PC-9 (cell line): ENCODE measurements at regions of chr7 and their contacts with region 1.

Region 1: DNA sequence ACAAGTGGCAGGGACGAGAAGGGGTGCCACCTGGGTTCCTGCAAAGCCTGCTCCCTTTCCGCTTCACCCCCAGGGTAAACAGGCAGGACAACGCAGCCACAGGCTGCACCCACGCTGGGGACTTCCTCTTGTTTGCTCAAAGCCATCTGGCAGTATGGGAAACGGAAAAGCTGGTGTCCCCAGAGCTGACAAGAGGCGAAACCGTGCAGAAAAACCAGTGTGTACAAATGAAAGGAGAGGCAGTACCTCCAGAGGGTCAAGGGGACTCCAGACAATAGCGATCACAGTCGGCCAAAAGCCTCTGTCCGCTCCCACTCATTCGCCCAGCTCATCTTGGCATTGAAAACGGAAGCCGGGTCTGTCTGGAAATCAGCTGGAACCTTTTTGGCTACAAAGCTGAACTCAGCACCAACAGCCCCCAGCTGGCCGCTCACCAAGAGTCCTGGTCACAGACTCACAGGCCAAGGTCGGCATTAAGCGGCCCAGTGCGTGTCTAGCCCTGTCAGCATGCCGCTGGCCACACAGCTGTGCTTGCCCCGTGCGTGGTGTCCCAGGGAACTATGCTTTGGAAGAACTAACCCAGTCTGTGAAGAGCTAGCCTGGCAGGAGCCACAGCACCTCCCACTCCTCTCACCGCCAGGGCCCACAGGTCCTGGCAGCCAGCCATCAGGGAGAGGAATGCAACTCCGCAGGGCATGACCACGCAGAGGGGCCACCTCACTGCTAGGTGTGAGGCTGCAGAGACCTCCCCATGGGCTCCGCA is 10.4 kb downstream of the TNS3 start:
- DNase-seq: peak in 1 of 2 experiments; percentile 91
- H3K4me3 ChIP-seq: no peak overlapping the region
- H3K27ac ChIP-seq: no peak overlapping the region
- H3K4me1 ChIP-seq: peaks cover 47% of the 10 kb centered on the region
- H3K27me3 ChIP-seq: no peaks in the 10 kb centered on the region
- CTCF ChIP-seq: no peak

Region 2: DNA sequence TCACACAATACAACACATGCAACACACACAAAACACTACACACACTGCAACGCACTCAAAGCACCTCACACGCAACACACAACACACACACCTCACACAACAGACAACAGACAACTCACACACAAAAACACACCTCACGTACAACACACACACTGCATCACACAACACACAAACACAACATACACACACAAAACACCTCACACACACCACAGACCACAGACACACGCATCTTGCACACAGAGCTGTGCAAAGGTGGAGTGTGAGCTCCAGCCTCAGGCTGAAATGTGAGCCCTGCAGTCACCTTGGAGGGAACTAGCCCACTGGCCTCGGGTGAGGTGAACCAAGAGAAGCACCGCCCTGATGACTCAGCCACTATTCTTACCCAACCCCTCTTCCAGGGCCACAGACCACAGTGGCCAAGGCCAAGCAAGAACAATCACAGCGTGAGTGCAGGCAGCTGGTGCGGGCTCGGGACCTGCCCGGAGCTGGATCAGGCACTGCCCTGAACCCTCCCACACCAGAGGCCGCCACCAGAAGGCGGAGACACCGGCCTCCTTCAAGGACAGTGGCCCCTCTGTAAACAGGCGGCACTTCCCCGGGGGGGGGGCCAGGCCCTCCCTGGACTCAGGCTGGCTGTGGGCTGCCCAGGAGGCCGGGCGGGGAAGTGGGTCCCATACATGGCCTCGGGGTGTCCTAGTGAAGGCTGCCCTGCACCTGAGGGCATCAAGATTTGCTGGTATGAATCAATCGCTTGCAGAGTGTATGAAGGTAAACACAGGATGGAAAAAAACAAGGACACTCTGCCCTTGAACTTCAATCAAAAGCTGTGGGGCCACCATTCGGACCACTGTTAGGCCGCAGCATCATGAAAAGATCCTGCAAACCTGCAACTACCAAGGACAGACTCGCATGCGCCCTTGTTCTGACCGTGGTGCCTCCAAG is 96.3 kb before region 1 on chr7:
- CTCF ChIA-PET with region 1: interaction called, 5 read pairs
- POLR2A ChIA-PET with region 1: no interaction called
- intact Hi-C with region 1: loop called (anchors 1 kb)
- DNase-seq: peak; percentile 99 to 100
- H3K4me3 ChIP-seq: peak overlapping the region; percentile 16; the same call in 1 of the 2 replicates
- H3K27ac ChIP-seq: peak overlapping the region; percentile 87
- H3K4me1 ChIP-seq: peaks cover 58% of the 10 kb centered on the region
- H3K27me3 ChIP-seq: no peaks in the 10 kb centered on the region
- CTCF ChIP-seq: no peak; the same call in 1 of the 2 replicates

Region 3: DNA sequence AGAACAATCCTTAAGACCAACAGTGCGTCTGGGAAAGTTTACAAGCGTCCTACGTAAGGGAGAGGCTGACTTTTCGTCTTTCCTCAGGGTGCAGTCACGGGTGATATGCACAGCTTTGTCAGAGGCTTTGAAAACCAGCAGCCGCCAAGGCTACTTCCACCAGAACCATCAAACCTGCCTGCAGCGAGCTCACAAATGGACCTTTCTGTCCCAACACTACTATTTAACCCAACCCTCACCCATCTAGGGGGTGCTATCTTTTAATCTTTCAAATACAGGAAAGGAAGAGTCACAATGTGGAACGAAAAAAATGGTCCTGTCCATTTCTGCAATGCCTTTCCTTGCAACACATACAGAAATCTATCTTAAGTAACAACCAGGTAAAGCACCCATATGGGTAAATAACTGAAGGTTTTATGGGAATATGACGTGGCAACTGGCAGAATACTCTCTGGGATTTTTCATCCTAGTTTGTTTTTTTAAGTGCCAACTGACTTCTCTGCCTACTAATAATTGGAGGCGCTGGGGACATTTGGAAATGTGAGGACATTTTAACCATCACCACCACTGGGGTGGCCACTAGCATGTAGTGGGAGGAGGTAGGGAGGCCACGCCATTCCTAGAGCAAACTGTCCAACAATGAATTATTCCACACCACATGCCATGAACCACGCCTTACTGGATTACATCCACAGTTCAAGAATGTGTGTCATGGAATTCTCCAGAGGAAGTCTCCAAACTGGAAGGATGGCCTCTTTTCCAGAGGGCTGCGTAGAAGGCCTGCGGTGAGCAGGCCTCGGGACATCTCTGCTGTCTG is 14.1 kb before region 1 on chr7:
- CTCF ChIA-PET with region 1: interaction called, 19 read pairs
- POLR2A ChIA-PET with region 1: no interaction called
- intact Hi-C with region 1: no loop called
- DNase-seq: no peak
- H3K4me3 ChIP-seq: no peak overlapping the region
- H3K27ac ChIP-seq: no peak overlapping the region
- H3K4me1 ChIP-seq: peaks cover 30% of the 10 kb centered on the region
- H3K27me3 ChIP-seq: no peaks in the 10 kb centered on the region
- CTCF ChIP-seq: no peak

Region 4: GRCh38 chr7:47669061-47669891 is 97.8 kb after region 1 on chr7:
- CTCF ChIA-PET with region 1: no interaction called
- POLR2A ChIA-PET with region 1: no interaction called
- intact Hi-C with region 1: loop called (anchors 2 kb)
- DNase-seq: peak in 1 of 2 experiments; percentile 69
- H3K4me3 ChIP-seq: no peak overlapping the region
- H3K27ac ChIP-seq: peak overlapping the region; percentile 1; the same call in 1 of the 2 replicates
- H3K4me1 ChIP-seq: peaks cover 39% of the 10 kb centered on the region
- H3K27me3 ChIP-seq: no peaks in the 10 kb centered on the region
- CTCF ChIP-seq: no peak

Region 5: DNA sequence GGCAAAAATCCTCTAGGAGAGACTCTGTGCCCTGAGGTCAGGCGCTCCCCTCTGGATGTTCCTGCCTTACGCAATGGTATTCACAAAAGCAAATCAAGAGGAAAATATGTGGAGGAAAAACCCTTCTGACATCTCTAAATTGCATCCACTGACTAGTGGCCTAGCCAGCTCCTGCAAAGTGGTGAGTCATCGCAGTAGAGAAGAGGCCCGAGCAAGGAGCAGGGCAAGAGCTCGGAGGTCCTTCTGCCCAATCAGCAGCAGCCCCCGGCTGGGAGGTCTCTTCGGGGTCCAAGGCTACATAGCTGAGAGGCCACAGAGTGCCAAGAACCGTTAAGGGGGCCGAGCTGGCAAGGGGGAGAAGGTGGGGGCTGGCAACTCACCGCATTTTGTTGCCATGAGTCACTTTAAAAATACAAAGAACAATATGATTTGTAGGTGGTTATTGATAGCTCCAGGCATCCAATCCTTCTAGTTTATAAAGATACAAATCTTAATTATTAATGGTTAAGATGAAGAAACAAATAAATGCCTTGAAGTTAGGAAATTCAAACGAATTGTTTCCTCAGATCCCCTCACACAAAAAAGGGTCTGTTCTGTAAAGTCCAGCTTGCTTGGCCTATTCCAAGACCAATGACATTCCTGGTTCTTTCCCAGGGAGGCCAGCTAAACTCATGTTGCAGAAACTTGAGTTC is 215.2 kb after region 1 on chr7:
- CTCF ChIA-PET with region 1: no interaction called
- POLR2A ChIA-PET with region 1: no interaction called
- intact Hi-C with region 1: loop called (anchors 1 kb)
- DNase-seq: peak; percentile 99 to 100
- H3K4me3 ChIP-seq: peak overlapping the region; percentile 20
- H3K27ac ChIP-seq: peak overlapping the region; percentile 93
- H3K4me1 ChIP-seq: peaks cover 77% of the 10 kb centered on the region
- H3K27me3 ChIP-seq: no peaks in the 10 kb centered on the region
- CTCF ChIP-seq: no peak

Region 6: GRCh38 chr7:47901542-47901941 is 330.0 kb after region 1 on chr7:
- CTCF ChIA-PET with region 1: no interaction called
- POLR2A ChIA-PET with region 1: no interaction called
- intact Hi-C with region 1: no loop called
- DNase-seq: peak; percentile 44 to 90
- H3K4me3 ChIP-seq: peak overlapping the region; percentile 34; the same call in 1 of the 2 replicates
- H3K27ac ChIP-seq: peak overlapping the region; percentile 91
- H3K4me1 ChIP-seq: peaks cover 26% of the 10 kb centered on the region
- H3K27me3 ChIP-seq: no peaks in the 10 kb centered on the region
- CTCF ChIP-seq: no peak

Region 7: GRCh38 chr7:48088559-48089045 is 517.1 kb after region 1 on chr7:
- CTCF ChIA-PET with region 1: no interaction called
- POLR2A ChIA-PET with region 1: no interaction called
- intact Hi-C with region 1: loop called (anchors 5 kb)
- DNase-seq: peak; percentile 93
- H3K4me3 ChIP-seq: peak overlapping the region; percentile 73
- H3K27ac ChIP-seq: peak overlapping the region; percentile 98
- H3K4me1 ChIP-seq: peaks cover 76% of the 10 kb centered on the region
- H3K27me3 ChIP-seq: no peaks in the 10 kb centered on the region
- CTCF ChIP-seq: no peak